Endothelial cell of umbilical vein (primary cell): ENCODE measurements at regions of chr13 and their contacts with region 1.

Region 1: DNA sequence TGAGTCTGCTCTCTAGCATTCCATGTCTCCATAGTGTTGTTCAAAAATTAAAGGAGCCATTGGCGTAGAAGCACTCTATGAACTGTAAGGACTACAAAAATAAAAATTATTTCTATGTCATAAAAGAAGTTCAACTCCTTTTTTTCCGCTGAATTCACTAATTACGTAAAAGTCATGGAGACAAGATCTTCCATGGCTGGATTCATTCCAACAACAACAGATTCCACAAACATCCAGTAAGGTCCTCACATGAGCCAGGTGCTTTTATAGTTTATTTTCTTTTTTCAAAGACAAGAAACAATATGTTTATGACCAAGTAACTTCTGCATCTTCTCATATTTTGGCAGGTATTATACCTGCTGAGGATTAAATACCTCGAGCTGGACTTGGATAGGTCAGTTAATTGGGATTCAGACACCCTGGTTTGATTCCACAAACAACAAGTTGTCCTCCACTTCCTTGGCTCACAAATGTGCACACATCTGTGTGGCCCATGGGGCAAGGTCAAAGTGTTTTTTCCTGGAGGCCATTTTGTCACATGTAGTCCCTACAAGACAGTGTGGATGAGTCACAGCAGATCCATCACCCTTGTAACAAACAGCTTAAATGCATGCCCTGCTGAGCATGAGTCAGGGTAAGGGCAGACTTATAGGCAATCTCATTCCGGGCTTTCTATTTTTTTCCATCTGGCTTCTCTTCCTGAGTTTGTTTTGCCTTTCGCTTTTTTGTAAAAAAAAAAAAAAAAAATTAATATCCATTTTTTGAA is 475.6 kb downstream of the COG6 start:
- DNase-seq: peak; percentile 93
- H3K4me3 ChIP-seq: no peak overlapping the region
- H3K27ac ChIP-seq: peak overlapping the region; percentile 60
- H3K4me1 ChIP-seq: peaks cover 13% of the 10 kb centered on the region
- H3K27me3 ChIP-seq: no peaks in the 10 kb centered on the region
- CTCF ChIP-seq: no peak
- POLR2A ChIP-seq: no peak

Region 2: DNA sequence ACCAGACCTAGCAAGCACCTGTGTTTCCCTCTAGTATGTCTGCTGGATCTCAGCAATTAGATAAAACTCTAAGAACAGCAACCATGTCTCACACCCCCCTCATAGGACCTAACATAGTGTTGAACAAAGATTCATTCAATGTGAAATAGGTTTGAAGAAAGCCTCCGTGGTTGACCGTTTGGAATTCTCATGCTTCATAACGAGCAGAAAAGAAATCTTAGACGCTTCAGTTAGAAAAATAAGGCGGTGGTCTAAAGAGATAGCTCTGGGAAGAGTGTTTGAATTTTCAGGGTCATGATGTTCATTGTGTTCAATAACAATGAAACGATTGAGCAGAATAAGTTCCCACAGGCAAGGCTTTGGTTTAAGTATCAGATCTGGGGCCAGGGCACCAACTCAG is 142.7 kb before region 1 on chr13:
- CTCF ChIA-PET with region 1: no interaction called
- POLR2A ChIA-PET with region 1: no interaction called
- dilution Hi-C with region 1: no loop called
- intact Hi-C with region 1: no loop called
- DNase-seq: no peak
- H3K4me3 ChIP-seq: no peak overlapping the region
- H3K27ac ChIP-seq: no peak overlapping the region
- H3K4me1 ChIP-seq: no peaks in the 10 kb centered on the region
- H3K27me3 ChIP-seq: no peaks in the 10 kb centered on the region
- CTCF ChIP-seq: no peak
- POLR2A ChIP-seq: no peak

Region 3: DNA sequence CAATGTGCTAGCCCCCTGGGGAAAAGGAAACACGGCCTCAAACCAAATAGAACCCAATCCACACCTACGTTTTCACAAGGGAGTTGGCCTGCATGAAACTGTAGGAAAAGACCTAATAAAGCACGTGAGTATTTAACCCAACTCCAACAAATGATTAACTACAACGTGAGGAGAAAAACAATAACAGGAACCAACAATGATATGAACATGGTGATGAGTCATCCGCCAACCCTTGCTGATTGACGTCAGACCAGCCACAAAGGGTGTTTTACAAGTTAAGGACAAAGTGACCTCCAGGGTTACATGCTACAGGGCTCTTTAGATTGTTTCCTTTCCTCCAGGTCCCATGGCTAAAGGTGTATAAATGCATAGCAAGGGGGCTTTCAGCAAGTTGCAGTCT is 15.0 kb before region 1 on chr13:
- CTCF ChIA-PET with region 1: interaction called, 3 read pairs
- POLR2A ChIA-PET with region 1: no interaction called
- dilution Hi-C with region 1: no loop called
- intact Hi-C with region 1: loop called (anchors 1 kb)
- DNase-seq: peak; percentile 98
- H3K4me3 ChIP-seq: no peak overlapping the region
- H3K27ac ChIP-seq: peak overlapping the region; percentile 93
- H3K4me1 ChIP-seq: peaks cover 17% of the 10 kb centered on the region
- H3K27me3 ChIP-seq: no peaks in the 10 kb centered on the region
- CTCF ChIP-seq: no peak
- POLR2A ChIP-seq: no peak

Region 4: GRCh38 chr13:40149611-40150274 is 18.7 kb after region 1 on chr13:
- CTCF ChIA-PET with region 1: interaction called, 5 read pairs
- POLR2A ChIA-PET with region 1: no interaction called
- dilution Hi-C with region 1: no loop called
- intact Hi-C with region 1: loop called (anchors 2 kb)
- DNase-seq: peak; percentile 98
- H3K4me3 ChIP-seq: no peak overlapping the region
- H3K27ac ChIP-seq: peak overlapping the region; percentile 80
- H3K4me1 ChIP-seq: peaks cover 25% of the 10 kb centered on the region
- H3K27me3 ChIP-seq: no peaks in the 10 kb centered on the region
- CTCF ChIP-seq: no peak
- POLR2A ChIP-seq: no peak